A673 (cell line): ENCODE measurements at regions of chr1 and their contacts with region 1.

Region 1: DNA sequence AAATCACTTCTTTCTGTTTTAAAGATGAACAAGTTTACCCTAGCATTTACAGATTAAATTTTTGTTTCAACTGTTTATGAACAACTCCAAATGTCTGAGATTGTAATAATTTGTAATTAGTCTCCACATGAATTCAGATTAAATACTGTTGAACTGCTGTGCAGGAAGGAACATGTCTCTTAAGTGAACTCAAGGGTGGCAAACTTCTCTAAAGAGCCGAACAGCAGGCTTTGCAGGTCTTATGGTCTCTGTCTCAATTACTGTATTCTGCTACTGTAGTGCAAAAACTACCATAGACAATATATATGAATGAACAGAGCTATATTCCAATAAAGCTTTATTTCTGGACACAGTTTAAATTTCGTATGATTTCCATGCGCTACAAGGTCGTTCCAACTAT is 6.6 kb downstream of the RSBN1 start:
- DNase-seq: peak; percentile 56
- H3K4me3 ChIP-seq: no peak overlapping the region
- H3K27ac ChIP-seq: no peak overlapping the region
- H3K4me1 ChIP-seq: peaks cover 18% of the 10 kb centered on the region
- H3K27me3 ChIP-seq: no peaks in the 10 kb centered on the region
- CTCF ChIP-seq: no peak

Region 2: GRCh38 chr1:113269168-113269963 is 536.3 kb before region 1 on chr1:
- CTCF ChIA-PET with region 1: interaction called, 12 read pairs
- POLR2A ChIA-PET with region 1: no interaction called
- intact Hi-C with region 1: no loop called
- DNase-seq: peak; percentile 9
- H3K4me3 ChIP-seq: no peak overlapping the region
- H3K27ac ChIP-seq: no peak overlapping the region
- H3K4me1 ChIP-seq: no peaks in the 10 kb centered on the region
- H3K27me3 ChIP-seq: peaks cover 3% of the 10 kb centered on the region
- CTCF ChIP-seq: no peak